ENCODE measurements at regions of chr5 and their contacts with region 1.

Region 1: GRCh38 chr5:122500245-122501075 is 188.4 kb downstream of the SNCAIP start:
- DNase-seq: no peak
- H3K4me3 ChIP-seq: no peak overlapping the region
- H3K27ac ChIP-seq: no peak overlapping the region
- H3K4me1 ChIP-seq: no peaks in the 10 kb centered on the region
- H3K27me3 ChIP-seq: no peaks in the 10 kb centered on the region
- CTCF ChIP-seq: no peak

Region 2: DNA sequence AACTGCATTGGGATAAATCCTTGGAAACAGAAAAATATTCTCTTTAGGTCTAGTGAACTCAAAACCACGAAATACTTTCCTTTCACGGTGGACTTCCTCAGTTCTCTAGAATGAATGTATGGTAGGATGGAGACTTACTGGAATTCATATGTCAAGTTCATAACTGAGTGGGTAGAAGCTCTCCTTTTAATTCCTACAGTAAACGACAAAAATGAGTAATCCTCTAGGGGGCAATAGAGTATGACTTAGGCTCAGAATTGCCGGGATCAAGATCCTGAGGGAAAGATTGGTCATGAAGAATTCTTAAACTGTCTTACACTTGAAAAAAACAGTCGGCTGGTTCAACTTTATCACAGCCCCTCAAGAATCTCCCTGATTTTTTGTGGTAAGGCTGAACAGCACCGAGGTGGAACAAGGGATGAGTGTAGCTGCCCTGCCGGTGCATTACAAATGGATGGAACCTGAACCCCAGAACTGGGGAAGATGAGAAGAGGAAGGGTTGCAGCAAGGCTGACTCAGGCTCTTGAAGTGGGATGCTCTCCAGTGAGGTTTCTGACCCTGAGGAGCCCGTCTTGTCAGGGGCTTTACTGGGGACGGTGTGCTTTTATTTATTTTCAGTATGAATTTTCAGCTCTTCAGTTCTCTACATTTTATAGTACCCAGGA is 408.4 kb before region 1 on chr5:
- intact Hi-C with region 1: loop called (anchors 10 kb)
- DNase-seq: no peak
- H3K4me3 ChIP-seq: no peak overlapping the region
- H3K27ac ChIP-seq: no peak overlapping the region
- H3K4me1 ChIP-seq: no peaks in the 10 kb centered on the region
- H3K27me3 ChIP-seq: no peaks in the 10 kb centered on the region
- CTCF ChIP-seq: no peak

Region 3: GRCh38 chr5:122295138-122295537 is 205.3 kb before region 1 on chr5:
- intact Hi-C with region 1: loop called (anchors 10 kb)
- DNase-seq: no peak
- H3K4me3 ChIP-seq: no peak overlapping the region
- H3K27ac ChIP-seq: no peak overlapping the region
- H3K4me1 ChIP-seq: no peaks in the 10 kb centered on the region
- H3K27me3 ChIP-seq: no peaks in the 10 kb centered on the region
- CTCF ChIP-seq: peak; percentile 13

Region 4: DNA sequence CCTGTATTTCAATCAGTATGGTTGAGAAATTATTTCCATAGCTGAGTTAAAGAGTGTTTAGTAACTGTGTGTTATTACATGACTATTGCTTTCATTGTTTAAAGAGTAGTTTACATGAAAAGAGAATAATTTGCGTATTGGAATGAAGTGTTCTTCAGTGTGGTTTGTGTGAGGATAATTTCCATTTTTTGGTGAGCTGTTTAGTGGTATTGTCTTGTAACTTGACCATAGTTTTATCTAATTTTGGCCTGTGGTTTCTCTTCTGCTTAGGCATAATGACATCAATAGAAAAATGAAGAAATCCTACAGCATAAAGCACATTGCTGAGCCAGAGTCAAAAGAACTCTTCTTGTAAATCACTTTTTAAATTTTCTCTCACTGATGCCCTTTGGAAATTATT is 37.2 kb before region 1 on chr5:
- intact Hi-C with region 1: no loop called
- DNase-seq: no peak
- H3K4me3 ChIP-seq: no peak overlapping the region
- H3K27ac ChIP-seq: no peak overlapping the region
- H3K4me1 ChIP-seq: no peaks in the 10 kb centered on the region
- H3K27me3 ChIP-seq: no peaks in the 10 kb centered on the region
- CTCF ChIP-seq: no peak

Region 5: GRCh38 chr5:122845229-122846050 is 345.0 kb after region 1 on chr5 and contains the start of gene SNX24:
- intact Hi-C with region 1: no loop called
- DNase-seq: peak; percentile 85
- H3K4me3 ChIP-seq: peak within 1 kb of the TSS; percentile 67
- H3K27ac ChIP-seq: peak within 1 kb of the TSS; percentile 83
- H3K4me1 ChIP-seq: no peaks in the 10 kb centered on the region
- H3K27me3 ChIP-seq: no peaks in the 10 kb centered on the region
- CTCF ChIP-seq: no peak
- total RNA-seq, gene SNX24: 8.8 to 17.0 TPM

Region 6: GRCh38 chr5:122967625-122968024 is 467.2 kb after region 1 on chr5:
- intact Hi-C with region 1: no loop called
- DNase-seq: no peak
- H3K4me3 ChIP-seq: no peak overlapping the region
- H3K27ac ChIP-seq: no peak overlapping the region
- H3K4me1 ChIP-seq: no peaks in the 10 kb centered on the region
- H3K27me3 ChIP-seq: no peaks in the 10 kb centered on the region
- CTCF ChIP-seq: no peak

Region 7: GRCh38 chr5:123610665-123611405 is 1110.4 kb after region 1 on chr5:
- intact Hi-C with region 1: loop called (anchors 10 kb)
- DNase-seq: peak; percentile 36
- H3K4me3 ChIP-seq: no peak overlapping the region
- H3K27ac ChIP-seq: no peak overlapping the region
- H3K4me1 ChIP-seq: no peaks in the 10 kb centered on the region
- H3K27me3 ChIP-seq: no peaks in the 10 kb centered on the region
- CTCF ChIP-seq: peak; percentile 97